Activated naive CD4-positive, alpha-beta T cell treated with anti-CD3 and anti-CD28 coated beads for 36 hours (primary cell): ENCODE measurements at regions of chr11 and their contacts with region 1.

Region 1: GRCh38 chr11:250740-251299 is 14.0 kb downstream of the PSMD13 start:
- DNase-seq: peak; percentile 93
- H3K4me3 Mint-ChIP-seq: no peak overlapping the region
- H3K27ac Mint-ChIP-seq: peak overlapping the region; percentile 81
- H3K4me1 Mint-ChIP-seq: peaks cover 13% of the 10 kb centered on the region
- H3K27me3 Mint-ChIP-seq: no peaks in the 10 kb centered on the region

Region 2: GRCh38 chr11:215581-216037 is 35.2 kb before region 1 on chr11:
- CTCF ChIA-PET with region 1: interaction called, 16 read pairs
- intact Hi-C with region 1: no loop called
- DNase-seq: no peak
- H3K4me3 Mint-ChIP-seq: no peak overlapping the region
- H3K27ac Mint-ChIP-seq: peak overlapping the region; percentile 59
- H3K4me1 Mint-ChIP-seq: peaks cover 21% of the 10 kb centered on the region
- H3K27me3 Mint-ChIP-seq: no peaks in the 10 kb centered on the region

Region 3: GRCh38 chr11:269146-269890 is 18.5 kb after region 1 on chr11:
- CTCF ChIA-PET with region 1: interaction called, 28 read pairs
- intact Hi-C with region 1: loop called (anchors 1 kb)
- DNase-seq: peak; percentile 80
- H3K4me3 Mint-ChIP-seq: peak overlapping the region; percentile 89
- H3K27ac Mint-ChIP-seq: peak overlapping the region; percentile 99
- H3K4me1 Mint-ChIP-seq: peaks cover 36% of the 10 kb centered on the region
- H3K27me3 Mint-ChIP-seq: no peaks in the 10 kb centered on the region

Region 4: GRCh38 chr11:288328-289144 is 37.7 kb after region 1 on chr11 and contains the start of gene PGGHG:
- CTCF ChIA-PET with region 1: interaction called, 14 read pairs
- intact Hi-C with region 1: loop called (anchors 2 kb)
- DNase-seq: peak; percentile 36
- H3K4me3 Mint-ChIP-seq: peak within 1 kb of the TSS; percentile 98
- H3K27ac Mint-ChIP-seq: peak within 1 kb of the TSS; percentile 97
- H3K4me1 Mint-ChIP-seq: peaks cover 38% of the 10 kb centered on the region
- H3K27me3 Mint-ChIP-seq: peaks cover 2% of the 10 kb centered on the region
- total RNA-seq, gene PGGHG: 99.6 to 101 TPM

Region 5: GRCh38 chr11:313787-314547 is 63.1 kb after region 1 on chr11 and contains the start of gene IFITM1:
- CTCF ChIA-PET with region 1: interaction called, 9 read pairs
- intact Hi-C with region 1: loop called (anchors 2 kb)
- DNase-seq: peak; percentile 77
- H3K4me3 Mint-ChIP-seq: peak within 1 kb of the TSS; percentile 93
- H3K27ac Mint-ChIP-seq: peak within 1 kb of the TSS; percentile 95
- H3K4me1 Mint-ChIP-seq: peaks cover 22% of the 10 kb centered on the region
- H3K27me3 Mint-ChIP-seq: no peaks in the 10 kb centered on the region
- total RNA-seq, gene IFITM1: 359 to 378 TPM

Region 6: DNA sequence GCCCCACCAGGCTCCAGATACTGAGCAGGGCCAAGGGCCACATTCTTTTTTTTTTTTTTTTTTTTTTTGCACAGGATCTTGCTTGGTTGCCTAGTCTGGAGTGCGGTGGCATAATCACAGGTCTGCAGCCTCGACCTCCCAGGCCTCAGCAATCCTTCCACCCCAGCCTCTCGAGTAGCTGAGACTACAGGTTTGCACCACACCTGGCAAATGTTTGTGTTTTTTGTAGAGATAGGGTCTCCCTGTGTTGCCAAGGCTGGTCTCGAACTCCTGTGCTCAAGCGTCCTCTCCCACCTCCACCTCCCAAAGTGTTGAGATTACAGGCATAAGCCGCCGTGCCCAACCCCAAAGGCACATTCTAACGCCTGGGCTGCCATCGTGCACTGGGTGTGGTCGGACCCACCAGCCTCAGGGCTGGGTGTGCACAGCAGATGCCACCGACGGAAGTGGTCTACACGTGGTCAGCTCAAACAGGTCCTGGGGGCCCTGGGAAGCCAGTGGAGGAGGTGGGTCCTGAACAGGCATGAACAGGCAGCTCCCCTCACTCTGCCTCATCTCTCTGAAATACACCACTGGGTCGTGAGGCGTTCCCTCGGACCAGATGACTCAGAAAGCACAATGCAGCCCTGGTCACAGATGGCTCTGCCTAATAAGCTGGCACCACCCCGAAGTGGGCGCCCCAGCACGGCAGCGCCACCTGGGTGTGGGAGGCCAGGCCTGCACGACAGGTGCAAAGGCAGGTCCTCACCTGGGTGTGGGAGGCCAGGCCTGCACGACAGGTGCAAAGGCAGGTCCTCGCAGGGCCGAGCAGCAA is 113.3 kb after region 1 on chr11:
- CTCF ChIA-PET with region 1: interaction called, 25 read pairs
- intact Hi-C with region 1: no loop called
- DNase-seq: peak; percentile 57
- H3K4me3 Mint-ChIP-seq: no peak overlapping the region
- H3K27ac Mint-ChIP-seq: no peak overlapping the region
- H3K4me1 Mint-ChIP-seq: peaks cover 11% of the 10 kb centered on the region
- H3K27me3 Mint-ChIP-seq: peaks cover 17% of the 10 kb centered on the region

Region 7: DNA sequence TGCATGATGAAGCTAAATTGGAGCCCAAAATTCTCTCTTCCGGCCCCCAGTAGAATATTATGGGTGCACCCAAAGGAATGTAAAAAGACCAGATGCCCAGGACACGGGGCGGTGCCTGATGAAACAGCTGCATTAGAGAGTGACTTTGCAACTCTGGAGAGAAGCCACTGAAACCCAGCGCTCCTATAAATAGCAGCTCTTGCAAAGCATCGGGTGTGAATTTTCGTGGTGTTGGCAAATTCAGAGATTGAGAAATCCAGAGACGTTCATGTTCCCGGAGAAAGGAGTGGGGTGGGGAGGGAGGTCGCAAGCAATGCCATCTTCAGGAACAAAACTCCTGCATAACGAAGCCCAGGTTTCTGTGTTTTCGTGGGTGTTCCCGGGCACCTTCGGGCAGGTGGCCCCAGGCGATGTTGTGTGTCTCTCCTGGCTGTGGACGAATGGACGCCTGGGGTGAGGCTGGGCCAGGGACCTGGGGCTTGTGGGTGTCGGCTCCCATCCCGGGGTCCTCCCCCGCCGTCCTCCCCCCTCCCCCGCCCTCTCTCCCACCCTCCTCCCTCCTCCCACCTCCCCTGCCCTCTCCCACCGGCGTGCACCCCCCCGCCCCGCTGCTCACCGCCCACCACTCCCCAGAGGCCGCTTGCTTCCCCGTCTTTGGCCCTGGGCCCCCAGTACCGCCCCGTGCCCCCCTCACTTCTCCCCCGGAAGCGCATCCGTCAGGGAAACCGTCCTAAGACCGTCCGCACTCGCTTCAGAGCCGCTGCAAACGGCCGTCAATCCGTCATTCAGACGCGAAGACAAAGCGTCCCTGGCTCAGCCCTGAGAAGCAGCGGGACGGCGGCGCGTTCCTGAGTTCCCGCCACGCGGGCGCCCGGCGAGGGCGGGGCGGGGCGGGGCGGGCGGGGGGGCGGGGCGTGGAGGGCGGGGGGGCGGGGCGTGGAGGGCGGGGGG is 1085.3 kb after region 1 on chr11:
- CTCF ChIA-PET with region 1: no interaction called
- intact Hi-C with region 1: no loop called
- DNase-seq: peak; percentile 70
- H3K4me3 Mint-ChIP-seq: peak overlapping the region; percentile 76
- H3K27ac Mint-ChIP-seq: peak overlapping the region; percentile 56
- H3K4me1 Mint-ChIP-seq: peaks cover 10% of the 10 kb centered on the region
- H3K27me3 Mint-ChIP-seq: peaks cover 3% of the 10 kb centered on the region